ENCODE measurements at regions of chr1 and their contacts with region 1.

Region 1: GRCh38 chr1:10209905-10210810 is at the start of gene KIF1B:
- DNase-seq: peak; percentile 96 to 97 (median 97)
- H3K4me3 ChIP-seq: peak within 1 kb of the TSS; percentile 73 to 91 (median 87)
- H3K27ac ChIP-seq: peak within 1 kb of the TSS in 1 of 2 experiments; percentile 61
- H3K4me1 ChIP-seq: peaks cover 3 to 18% (median 16%) of the 10 kb centered on the region in 4 experiments
- H3K27me3 ChIP-seq: peaks cover 0 to 8% (median 2%) of the 10 kb centered on the region in 5 experiments

Region 2: GRCh38 chr1:10220200-10220599 is 10.0 kb after region 1 on chr1:
- CTCF ChIA-PET with region 1: interaction called, 15 read pairs
- POLR2A ChIA-PET with region 1: no interaction called
- DNase-seq: no peak
- H3K4me3 ChIP-seq: no peak overlapping the region
- H3K27ac ChIP-seq: no peak overlapping the region
- H3K4me1 ChIP-seq: peaks cover 2 to 3% (median 3%) of the 10 kb centered on the region in 4 experiments
- H3K27me3 ChIP-seq: no peaks in the 10 kb centered on the region

Region 3: DNA sequence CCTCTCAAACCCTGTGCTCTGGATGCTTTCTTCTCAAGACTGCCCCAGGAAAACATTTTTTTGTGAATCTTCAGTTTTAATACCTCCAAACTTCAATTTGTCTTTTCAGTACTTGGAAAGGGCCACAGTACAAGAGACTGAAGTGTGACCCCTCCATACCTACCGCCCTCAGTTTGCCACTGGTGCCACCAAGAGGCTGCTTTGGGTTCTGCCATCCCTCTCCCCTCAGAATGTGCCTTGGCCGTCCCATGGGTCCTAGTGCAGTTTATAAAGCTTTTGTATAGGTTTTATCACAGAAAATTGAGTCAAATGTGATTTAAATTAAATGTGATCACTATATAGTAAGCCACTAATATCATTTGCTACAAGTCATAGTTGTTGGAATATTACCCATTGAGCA is 127.9 kb after region 1 on chr1:
- CTCF ChIA-PET with region 1: interaction called, 13 read pairs
- POLR2A ChIA-PET with region 1: no interaction called
- DNase-seq: peak; percentile 40 to 69 (median 67)
- H3K4me3 ChIP-seq: no peak overlapping the region
- H3K27ac ChIP-seq: no peak overlapping the region
- H3K4me1 ChIP-seq: no peaks in the 10 kb centered on the region
- H3K27me3 ChIP-seq: no peaks in the 10 kb centered on the region

Measured in common myeloid progenitor, CD34-positive (primary cell).